Esophagus muscularis mucosa (tissue), 4 donors: ENCODE measurements at regions of chr17 and their contacts with region 1.

Region 1: GRCh38 chr17:7403977-7404736 is at the start of gene TMEM256:
- DNase-seq: peak; percentile 100
- H3K4me3 ChIP-seq: peak within 1 kb of the TSS; percentile 77 to 87 (median 85)
- H3K27ac ChIP-seq: peak within 1 kb of the TSS; percentile 90 to 93 (median 92)
- H3K4me1 ChIP-seq: peaks cover 20 to 56% (median 39%) of the 10 kb centered on the region in 4 donors
- H3K27me3 ChIP-seq: no peaks in the 10 kb centered on the region
- CTCF ChIP-seq: peak in 1 of 3 experiments; percentile 9
- EP300 ChIP-seq: no peak
- POLR2A ChIP-seq: peak; percentile 89
- total RNA-seq, gene TMEM256: 59.6 to 121 (median 74.7) TPM

Region 2: GRCh38 chr17:7280519-7281429 is 123.4 kb before region 1 on chr17:
- intact Hi-C with region 1: no loop called
- DNase-seq: peak; percentile 96
- H3K4me3 ChIP-seq: peak overlapping the region; percentile 64 to 77 (median 69)
- H3K27ac ChIP-seq: peak overlapping the region; percentile 95 to 98 (median 96)
- H3K4me1 ChIP-seq: peaks cover 47 to 57% (median 53%) of the 10 kb centered on the region in 4 donors
- H3K27me3 ChIP-seq: peaks cover 0 to 7% (median 0%) of the 10 kb centered on the region in 4 donors
- CTCF ChIP-seq: peak in 2 of 3 experiments; percentile 95 to 98
- EP300 ChIP-seq: no peak
- POLR2A ChIP-seq: peak; percentile 4

Region 3: DNA sequence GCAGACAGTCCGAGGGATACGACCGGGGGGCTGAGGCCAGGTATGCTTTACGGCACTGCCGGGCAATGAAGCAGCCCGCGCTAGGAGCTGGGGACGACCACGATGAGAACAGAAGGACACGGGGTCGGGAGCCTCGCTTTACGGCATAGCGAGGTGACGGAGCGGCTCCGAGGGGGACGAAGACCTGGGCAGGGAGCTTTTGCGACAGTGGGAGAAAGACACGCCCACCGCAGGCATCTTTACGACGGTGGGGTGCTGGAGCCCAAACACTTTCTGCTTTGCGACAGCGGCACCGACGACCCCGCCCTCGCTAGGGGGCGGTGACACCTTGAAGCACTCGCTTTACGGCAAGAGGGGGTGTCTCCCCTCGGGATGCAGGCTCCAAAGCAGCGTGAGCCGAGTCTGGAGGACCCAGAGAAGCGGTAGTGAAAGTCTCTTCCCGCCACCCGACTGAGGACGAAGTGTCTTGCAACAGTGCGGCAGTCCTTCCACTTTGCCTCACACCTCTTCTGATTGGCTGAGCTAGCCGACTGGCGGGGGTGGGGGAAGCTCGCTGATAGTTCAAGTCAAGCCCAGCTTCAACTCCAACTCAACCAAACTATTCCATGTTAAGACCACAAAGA is 74.7 kb before region 1 on chr17:
- intact Hi-C with region 1: no loop called
- DNase-seq: peak; percentile 99
- H3K4me3 ChIP-seq: peak overlapping the region; percentile 75 to 89 (median 84)
- H3K27ac ChIP-seq: peak overlapping the region; percentile 92 to 93 (median 92)
- H3K4me1 ChIP-seq: peaks cover 16 to 29% (median 24%) of the 10 kb centered on the region in 4 donors
- H3K27me3 ChIP-seq: peaks cover 0 to 16% (median 0%) of the 10 kb centered on the region in 4 donors
- CTCF ChIP-seq: peak in 1 of 3 experiments; percentile 3
- EP300 ChIP-seq: no peak
- POLR2A ChIP-seq: peak; percentile 64

Region 4: GRCh38 chr17:7351665-7352501 is 52.3 kb before region 1 on chr17 and contains the start of gene KCTD11:
- intact Hi-C with region 1: loop called (anchors 5 kb)
- DNase-seq: peak; percentile 96
- H3K4me3 ChIP-seq: peak within 1 kb of the TSS; percentile 86 to 98 (median 90)
- H3K27ac ChIP-seq: peak within 1 kb of the TSS; percentile 98 to 100 (median 99)
- H3K4me1 ChIP-seq: peaks cover 24 to 77% (median 71%) of the 10 kb centered on the region in 4 donors
- H3K27me3 ChIP-seq: no peaks in the 10 kb centered on the region
- CTCF ChIP-seq: peak; percentile 47 to 74 (median 61)
- EP300 ChIP-seq: no peak
- POLR2A ChIP-seq: peak; percentile 22
- total RNA-seq, gene KCTD11: 9.1 to 18.2 (median 13.3) TPM